ENCODE measurements at regions of chr17 and their contacts with region 1.

Region 1: GRCh38 chr17:57440522-57441485 is 184.5 kb downstream of the MSI2 start:
- ATAC-seq: peak; percentile 89 to 95 (median 92)
- H3K4me3 ChIP-seq: no peak overlapping the region
- H3K27ac ChIP-seq: peak overlapping the region; percentile 81 to 83
- H3K4me1 ChIP-seq: peaks cover 55 to 63% of the 10 kb centered on the region in 2 donors

Region 2: DNA sequence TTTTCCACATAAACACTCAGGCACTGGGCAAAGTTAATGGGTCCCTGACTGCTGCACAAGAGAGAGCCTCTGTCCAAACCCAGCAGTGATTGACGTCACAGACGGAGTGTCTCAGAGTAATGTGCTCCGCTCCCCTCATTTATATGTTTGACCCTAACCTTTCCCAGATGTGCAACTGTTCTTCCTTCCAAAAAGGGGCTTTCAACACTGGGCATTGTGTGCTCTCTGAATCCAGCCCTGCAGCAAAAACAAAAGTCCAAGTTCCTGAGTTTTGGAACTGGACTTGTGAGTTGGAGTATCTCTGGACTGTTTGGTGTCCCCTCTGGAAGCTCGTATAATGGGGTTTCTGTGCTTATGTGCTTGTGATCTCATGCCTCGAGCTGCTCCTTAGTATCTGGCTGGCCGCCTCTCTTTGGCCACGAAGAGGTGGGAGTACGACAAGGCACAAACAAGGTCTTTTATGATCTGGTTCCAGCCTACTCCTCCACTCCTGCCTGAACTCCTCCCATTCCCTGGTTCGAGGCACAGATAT is 1853.1 kb before region 1 on chr17:
- in situ Hi-C with region 1: no loop called
- ATAC-seq: peak in 1 of 8 experiments; percentile 42
- H3K4me3 ChIP-seq: no peak overlapping the region
- H3K27ac ChIP-seq: no peak overlapping the region
- H3K4me1 ChIP-seq: peaks cover 0 to 3% of the 10 kb centered on the region in 2 donors

Region 3: DNA sequence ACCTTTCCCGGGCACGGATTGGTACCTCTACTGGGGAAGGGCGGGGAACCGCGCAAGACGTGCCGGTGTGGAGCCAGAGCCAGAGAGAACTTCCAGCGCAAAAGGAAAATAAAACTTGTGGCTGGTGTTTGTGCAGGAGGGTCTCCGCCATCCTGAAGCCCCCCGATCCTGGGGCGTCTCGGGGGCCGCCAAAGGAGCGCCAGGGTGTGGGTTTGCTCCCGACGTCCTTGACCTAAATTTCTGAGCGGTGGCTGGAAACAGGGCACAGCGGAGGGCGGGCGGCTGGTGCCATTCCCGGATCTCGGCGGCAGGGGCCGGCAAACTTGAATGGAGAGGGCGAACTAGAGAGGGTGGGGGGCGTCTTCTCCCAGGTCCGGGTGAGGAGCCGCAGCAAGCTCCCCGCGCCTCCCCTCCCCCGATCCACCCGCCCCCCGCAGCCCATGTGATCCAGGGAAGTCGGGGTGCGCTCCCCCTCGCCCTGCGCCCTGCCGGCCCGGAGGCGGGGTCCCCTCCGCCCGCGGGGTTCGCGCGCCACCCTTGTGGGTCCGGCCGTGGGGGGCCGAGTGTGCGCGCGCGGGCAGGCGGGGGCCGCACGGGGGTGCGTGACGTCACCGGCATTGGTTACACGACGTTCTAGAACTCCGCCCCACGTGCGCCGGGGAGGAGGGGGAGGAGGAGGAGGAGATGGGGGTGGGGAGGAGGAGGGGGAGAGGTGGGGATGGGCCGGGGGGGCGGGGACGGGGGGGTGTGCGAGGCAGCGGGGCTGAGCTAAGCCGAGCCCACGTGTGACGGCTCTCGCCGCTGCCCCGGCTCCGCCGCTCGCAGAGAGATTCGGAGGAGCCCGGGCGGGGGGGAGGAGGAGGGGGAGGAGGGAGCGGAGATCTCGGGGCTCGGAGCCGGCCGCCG is 184.8 kb before region 1 on chr17 and contains the start of gene MSI2:
- in situ Hi-C with region 1: loop called in 1 of 9 experiments (anchors 25 kb)
- ATAC-seq: peak; percentile 75 to 88 (median 84)
- H3K4me3 ChIP-seq: peak within 1 kb of the TSS; percentile 58 to 98 (median 74)
- H3K27ac ChIP-seq: peak within 1 kb of the TSS; percentile 84 to 89
- H3K4me1 ChIP-seq: peaks cover 26% of the 10 kb centered on the region in 2 donors
- total RNA-seq, gene MSI2: 33.0 to 114 (median 67.5) TPM

Region 4: GRCh38 chr17:57338257-57338914 is 102.4 kb before region 1 on chr17:
- in situ Hi-C with region 1: loop called in 1 of 9 experiments (anchors 25 kb)
- ATAC-seq: peak in 5 of 8 experiments; percentile 53 to 78 (median 65)
- H3K4me3 ChIP-seq: no peak overlapping the region
- H3K27ac ChIP-seq: peak overlapping the region; percentile 3 to 27
- H3K4me1 ChIP-seq: peaks cover 13 to 26% of the 10 kb centered on the region in 2 donors